ENCODE measurements at regions of chr1 and their contacts with region 1.

Region 1: GRCh38 chr1:3618881-3619671 is 5.7 kb upstream of the TPRG1L start:
- DNase-seq: peak in 8 of 10 donors; percentile 37 to 84 (median 74)
- H3K4me3 ChIP-seq: no peak overlapping the region
- H3K27ac ChIP-seq: peak overlapping the region in 1 of 59 donors; percentile 71
- H3K27me3 ChIP-seq: no peaks in the 10 kb centered on the region
- CTCF ChIP-seq: peak; percentile 76 to 97 (median 93)

Region 2: DNA sequence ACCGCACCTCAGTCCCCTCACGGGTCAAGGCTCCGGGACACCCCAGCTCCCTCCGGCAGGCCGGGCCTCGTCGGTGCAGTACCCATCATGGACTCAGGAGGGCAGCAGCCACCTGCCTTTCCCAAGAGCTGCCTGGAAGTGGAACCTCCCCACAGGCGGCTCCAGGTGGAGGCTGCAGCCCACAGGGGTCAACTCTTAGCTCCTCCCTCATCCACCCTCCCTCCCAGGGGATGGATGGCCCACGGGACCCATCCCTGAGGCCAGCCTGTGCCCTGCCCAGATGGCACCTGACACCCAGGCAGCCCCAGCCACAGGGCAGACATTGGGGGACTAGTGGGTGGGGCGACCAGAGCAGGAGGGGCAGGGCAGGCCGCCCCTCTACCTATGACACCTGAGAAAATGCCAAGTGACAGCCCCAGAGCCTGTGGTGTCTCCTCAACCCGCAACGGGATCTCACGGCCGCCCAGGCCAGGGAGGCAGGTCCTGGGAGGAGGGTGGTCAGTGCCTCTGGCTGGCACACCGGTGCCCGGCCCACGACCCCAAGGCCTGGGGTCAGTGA is 165.8 kb before region 1 on chr1:
- intact Hi-C with region 1: loop called (anchors 2 to 5 kb)
- DNase-seq: peak; percentile 66 to 88 (median 74)
- H3K4me3 ChIP-seq: no peak overlapping the region
- H3K27ac ChIP-seq: peak overlapping the region in 2 of 59 donors; percentile 36 to 56
- H3K27me3 ChIP-seq: peaks cover 0 to 14% (median 0%) of the 10 kb centered on the region in 45 donors
- CTCF ChIP-seq: peak; percentile 66 to 99 (median 96)

Region 3: DNA sequence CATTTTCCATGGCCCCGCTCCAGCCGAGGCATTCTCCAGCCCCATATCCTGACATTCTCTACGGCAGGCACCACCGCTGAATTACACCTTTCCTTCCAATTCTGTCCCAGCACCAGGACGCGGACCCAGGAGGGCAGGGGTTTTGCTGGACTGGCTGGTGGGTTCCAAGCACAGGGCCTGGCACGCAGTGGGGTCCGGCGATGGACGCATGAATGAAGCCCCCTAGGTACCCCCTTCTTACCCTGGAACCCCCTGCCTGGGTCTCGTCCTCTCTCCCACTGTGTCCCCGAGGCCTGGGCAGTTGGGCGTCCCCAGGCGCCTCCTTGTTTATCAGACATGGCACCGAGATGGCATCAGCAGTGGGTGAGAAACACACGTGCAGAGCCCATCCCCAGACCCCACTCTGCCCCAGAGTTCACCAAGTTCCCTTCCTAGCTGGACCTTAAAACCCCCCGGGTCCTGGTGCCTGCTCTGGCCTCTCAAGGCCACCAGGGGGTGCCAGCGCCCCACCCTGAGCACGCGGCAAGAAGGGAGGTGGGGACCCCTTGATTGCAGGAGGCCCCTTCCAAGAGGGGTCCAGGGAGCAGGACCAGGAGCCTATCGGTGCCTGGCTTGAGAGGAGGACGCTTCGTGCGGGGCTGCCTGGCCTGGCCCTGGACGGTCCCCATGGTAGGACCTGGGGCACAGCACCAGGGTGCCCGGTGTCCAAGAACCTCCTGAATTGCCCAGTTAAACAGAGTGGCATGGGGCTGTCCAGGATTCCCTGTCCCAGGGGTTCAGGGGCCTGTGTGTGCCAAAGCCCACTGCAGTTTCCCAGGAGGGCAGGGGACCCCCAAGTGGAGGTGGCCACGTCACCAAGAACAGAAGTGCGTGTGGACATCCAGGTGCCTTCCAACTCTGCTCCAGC is 53.9 kb before region 1 on chr1:
- intact Hi-C with region 1: loop called (anchors 1 to 5 kb)
- DNase-seq: no peak
- H3K4me3 ChIP-seq: no peak overlapping the region
- H3K27ac ChIP-seq: no peak overlapping the region
- H3K27me3 ChIP-seq: peaks cover 0 to 3% (median 0%) of the 10 kb centered on the region in 45 donors
- CTCF ChIP-seq: peak; percentile 41 to 90 (median 79)

Measured in dorsolateral prefrontal cortex (tissue), 120 donors.